Activated naive CD4-positive, alpha-beta T cell treated with anti-CD3 and anti-CD28 coated beads for 36 hours (primary cell): ENCODE measurements at regions of chr19 and their contacts with region 1.

Region 1: DNA sequence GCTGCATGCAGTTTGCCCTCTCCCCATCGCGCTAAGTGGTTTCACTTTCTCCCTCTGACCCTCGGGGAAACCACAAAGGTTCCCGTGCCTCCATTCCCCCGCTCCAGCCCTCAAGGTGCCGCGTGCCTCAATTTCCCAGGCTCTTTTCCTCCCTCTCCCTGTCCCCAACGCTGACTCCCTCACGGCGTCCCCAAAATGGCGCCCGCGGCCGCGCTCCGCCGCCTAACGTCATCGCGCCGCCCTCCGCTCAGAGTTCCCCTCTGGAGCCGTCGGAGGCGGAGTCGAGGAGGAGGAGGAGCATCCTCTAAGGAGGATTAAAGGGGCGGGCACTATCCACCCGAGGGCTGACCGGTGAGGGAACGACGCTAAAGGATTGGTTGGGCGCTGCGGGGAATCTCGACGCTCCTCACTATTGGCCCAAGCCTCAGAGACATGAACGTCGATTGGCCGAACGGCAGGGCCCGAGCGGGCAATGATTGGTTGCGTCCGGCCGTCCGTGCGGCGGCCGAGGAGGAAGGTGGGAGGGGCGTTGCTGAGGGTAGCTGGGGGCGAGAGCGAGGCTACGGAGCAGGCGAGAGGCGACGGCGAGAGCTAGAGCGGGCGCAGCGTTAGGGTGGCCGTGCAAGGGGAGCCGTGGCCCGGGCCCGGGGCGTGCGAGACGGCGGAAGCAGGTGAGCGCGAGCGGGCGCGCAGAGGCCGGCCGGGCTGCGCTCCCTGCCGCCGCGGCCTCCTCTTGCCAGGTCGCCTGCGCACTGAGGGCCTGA is at the start of gene ZNF574:
- DNase-seq: peak; percentile 99
- H3K4me3 Mint-ChIP-seq: peak within 1 kb of the TSS; percentile 97
- H3K27ac Mint-ChIP-seq: peak within 1 kb of the TSS; percentile 96
- H3K4me1 Mint-ChIP-seq: peaks cover 22% of the 10 kb centered on the region
- H3K27me3 Mint-ChIP-seq: no peaks in the 10 kb centered on the region
- total RNA-seq, gene ZNF574: 8.4 to 8.8 TPM

Region 2: DNA sequence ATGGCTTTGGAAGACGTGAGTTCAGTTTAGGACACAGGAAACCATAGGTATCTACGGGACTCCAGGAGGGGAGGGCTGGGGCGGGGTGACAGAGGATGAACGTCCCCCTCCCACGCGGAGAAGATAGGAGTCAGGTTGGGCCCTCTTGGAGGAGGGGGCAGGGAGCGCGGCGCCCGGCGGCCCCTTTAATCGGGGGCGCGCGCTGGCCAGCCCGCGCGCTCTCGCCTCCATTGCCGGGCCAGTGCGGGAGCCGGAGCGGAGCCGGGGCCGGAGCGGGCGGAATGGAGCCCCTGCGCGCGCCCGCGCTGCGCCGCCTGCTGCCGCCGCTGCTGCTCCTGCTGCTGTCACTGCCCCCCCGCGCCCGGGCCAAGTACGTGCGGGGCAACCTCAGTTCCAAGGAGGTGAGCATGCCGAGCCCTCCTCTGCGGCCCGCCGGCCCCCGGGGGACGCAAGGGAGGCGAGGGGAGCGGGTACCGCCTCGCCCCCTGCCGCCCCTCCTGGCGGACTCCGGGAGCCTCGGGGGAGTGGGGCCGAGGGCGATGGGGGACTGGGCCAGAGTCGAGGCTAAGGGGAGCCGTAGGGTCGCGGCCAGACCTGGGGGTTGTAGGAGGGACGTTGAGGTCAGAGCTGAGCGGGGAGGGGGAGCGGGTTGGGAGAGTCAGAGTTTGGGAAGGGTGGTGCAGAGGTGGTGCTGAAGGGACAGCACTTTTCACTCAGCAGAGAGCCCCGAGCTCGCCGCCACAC is 237.5 kb after region 1 on chr19 and contains the start of gene TMEM145:
- CTCF ChIA-PET with region 1: no interaction called
- intact Hi-C with region 1: no loop called
- DNase-seq: peak; percentile 46
- H3K4me3 Mint-ChIP-seq: peak within 1 kb of the TSS; percentile 56
- H3K27ac Mint-ChIP-seq: no peak within 1 kb of the TSS
- H3K4me1 Mint-ChIP-seq: peaks cover 9% of the 10 kb centered on the region
- H3K27me3 Mint-ChIP-seq: peaks cover 24% of the 10 kb centered on the region
- total RNA-seq, gene TMEM145: not detected

Region 3: DNA sequence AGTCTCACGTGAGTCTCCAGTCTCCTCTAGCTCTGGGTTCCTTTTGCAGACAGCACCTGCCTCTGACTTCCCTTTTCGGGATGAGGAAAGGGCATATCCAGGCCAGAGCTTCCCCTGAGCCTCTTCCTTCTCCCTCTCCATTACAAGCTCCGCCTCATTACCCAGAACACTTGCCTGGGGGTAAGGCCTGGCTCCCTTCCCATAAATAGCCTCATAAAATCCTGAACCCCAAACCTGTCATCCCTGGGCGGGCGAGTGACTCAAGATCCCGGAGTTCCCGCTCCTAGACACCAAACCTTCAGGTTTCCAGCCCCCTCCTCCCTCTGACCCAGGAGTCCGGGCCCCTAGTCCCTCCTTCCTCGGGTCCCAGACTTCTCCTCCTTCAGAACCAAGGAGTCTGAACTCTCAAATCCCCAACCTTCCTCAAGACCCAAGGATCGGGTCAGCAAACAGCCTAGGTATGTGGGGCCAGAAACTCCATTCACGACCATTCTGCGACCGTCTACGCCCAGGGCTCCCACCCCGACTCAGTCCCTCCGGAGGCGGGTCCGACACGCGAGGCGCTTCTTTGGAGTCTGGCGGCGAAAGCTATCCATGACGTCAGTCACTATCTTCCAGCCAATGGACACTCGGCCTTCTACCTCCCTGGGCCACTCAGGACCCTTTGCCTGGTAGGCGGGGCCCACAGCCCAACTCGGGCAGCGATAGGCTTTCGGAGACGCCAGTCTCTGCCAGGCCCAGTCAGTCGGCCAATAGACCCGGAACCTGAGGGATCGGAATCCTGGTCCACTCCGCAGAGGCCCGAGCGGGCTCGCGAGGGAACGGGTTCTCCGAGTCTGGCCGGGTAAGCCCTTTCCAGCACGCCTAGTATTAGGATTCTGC is 320.8 kb after region 1 on chr19:
- CTCF ChIA-PET with region 1: no interaction called
- intact Hi-C with region 1: loop called (anchors 2 kb)
- DNase-seq: peak; percentile 98
- H3K4me3 Mint-ChIP-seq: peak overlapping the region; percentile 89
- H3K27ac Mint-ChIP-seq: peak overlapping the region; percentile 88
- H3K4me1 Mint-ChIP-seq: peaks cover 32% of the 10 kb centered on the region
- H3K27me3 Mint-ChIP-seq: no peaks in the 10 kb centered on the region